Natural killer cell (primary cell): ENCODE measurements at regions of chr6 and their contacts with region 1.

Region 1: DNA sequence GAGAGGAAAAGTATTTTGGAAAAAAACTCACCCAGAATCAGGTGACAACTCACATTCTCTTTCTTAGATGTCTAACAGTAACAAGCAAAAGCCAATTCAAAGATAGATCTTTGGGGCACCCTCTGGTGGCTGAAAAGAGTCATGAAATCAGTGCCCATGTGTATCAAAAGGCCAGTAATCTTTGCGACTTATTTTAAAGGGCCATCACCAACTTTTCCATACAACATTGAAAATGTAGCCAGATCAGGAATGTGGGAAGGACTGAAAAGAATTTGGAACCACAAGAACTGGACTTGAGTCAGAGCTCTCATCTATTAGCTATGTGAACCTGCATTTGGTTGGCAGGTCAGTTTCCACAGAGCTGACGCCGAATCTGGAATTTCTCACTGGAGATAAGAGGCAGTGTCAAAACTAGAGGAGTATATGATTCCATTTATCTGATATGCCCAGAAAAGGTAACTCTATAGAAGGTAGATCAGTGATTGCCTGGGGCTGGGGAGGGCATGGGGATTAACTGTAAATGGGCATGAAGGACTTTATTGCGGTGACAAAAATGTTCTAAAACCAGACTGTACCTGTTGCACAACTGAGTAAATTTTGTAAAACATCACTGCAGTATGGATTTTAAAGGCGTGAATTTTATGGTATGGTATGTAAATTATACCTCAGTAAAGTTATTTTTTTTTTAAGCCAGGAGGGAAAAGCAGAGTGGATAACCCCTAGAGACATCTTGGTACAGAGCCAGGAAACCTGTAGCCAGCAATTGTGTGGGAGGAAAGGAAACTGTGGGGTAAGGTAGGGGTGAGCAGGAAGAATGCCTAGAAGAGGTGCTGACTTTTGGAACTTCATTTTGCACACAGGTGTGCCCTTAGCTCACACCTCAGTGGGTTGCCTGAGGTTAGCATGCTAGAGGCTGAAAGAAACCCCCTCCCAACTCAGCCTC is 117.1 kb upstream of the ASF1A start:
- DNase-seq: peak; percentile 36 to 84
- ATAC-seq: peak; percentile 83 to 92 (median 85)
- H3K4me3 ChIP-seq: no peak overlapping the region
- H3K4me3 Mint-ChIP-seq: no peak overlapping the region
- H3K27ac ChIP-seq: no peak overlapping the region
- H3K27ac Mint-ChIP-seq: no peak overlapping the region
- H3K4me1 ChIP-seq: no peaks in the 10 kb centered on the region
- H3K4me1 Mint-ChIP-seq: peaks cover 6% of the 10 kb centered on the region in 2 donors
- H3K27me3 ChIP-seq: no peaks in the 10 kb centered on the region
- H3K27me3 Mint-ChIP-seq: peaks cover 0 to 3% of the 10 kb centered on the region in 2 donors
- CTCF ChIP-seq: peak; percentile 82

Region 2: DNA sequence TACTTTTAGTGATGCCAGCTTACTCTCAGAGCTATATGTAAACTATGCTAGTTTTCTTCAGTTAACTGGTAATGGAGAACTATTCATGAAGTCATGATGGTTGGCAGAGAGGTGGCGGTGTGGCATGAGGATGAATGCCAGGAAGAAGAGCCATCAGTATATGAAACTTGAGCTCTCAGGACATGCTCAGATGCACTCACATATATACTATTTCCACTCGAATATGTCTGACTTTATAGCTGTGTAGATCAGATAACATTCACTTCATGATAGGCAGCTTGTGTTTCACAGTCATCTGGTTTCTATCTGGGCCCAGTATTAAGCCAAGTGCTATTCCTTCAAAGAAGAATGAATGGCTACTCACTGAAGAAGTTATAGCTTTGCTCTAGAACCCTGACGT is 79.3 kb before region 1 on chr6:
- intact Hi-C with region 1: loop called (anchors 1 kb)
- DNase-seq: peak in 1 of 2 donors; percentile 50
- ATAC-seq: peak in 1 of 3 donors; percentile 36
- H3K4me3 ChIP-seq: no peak overlapping the region
- H3K4me3 Mint-ChIP-seq: no peak overlapping the region
- H3K27ac ChIP-seq: no peak overlapping the region
- H3K27ac Mint-ChIP-seq: no peak overlapping the region
- H3K4me1 ChIP-seq: no peaks in the 10 kb centered on the region
- H3K4me1 Mint-ChIP-seq: peaks cover 66 to 71% of the 10 kb centered on the region in 2 donors
- H3K27me3 ChIP-seq: no peaks in the 10 kb centered on the region
- H3K27me3 Mint-ChIP-seq: no peaks in the 10 kb centered on the region
- CTCF ChIP-seq: no peak

Region 3: DNA sequence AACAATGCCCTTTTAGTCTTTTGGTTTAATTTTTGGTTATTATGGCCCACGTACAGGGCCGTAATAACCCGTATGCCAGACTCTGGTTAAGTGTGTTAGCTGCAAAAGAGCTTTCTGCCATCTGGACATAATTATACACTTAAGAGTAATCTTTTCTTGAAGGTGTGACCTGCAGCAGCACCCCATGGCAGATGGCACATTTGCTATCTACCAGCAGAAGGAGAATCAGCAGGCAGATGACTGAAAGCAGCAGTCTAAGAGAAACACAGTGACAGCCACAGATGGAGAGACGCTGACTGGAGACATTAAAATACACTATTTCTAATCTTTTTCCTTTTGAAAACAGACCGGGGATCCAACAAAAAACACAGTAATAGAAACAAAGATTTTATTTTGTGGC is 135.8 kb after region 1 on chr6:
- intact Hi-C with region 1: no loop called
- DNase-seq: no peak
- ATAC-seq: no peak
- H3K4me3 ChIP-seq: no peak overlapping the region
- H3K4me3 Mint-ChIP-seq: no peak overlapping the region
- H3K27ac ChIP-seq: no peak overlapping the region
- H3K27ac Mint-ChIP-seq: no peak overlapping the region
- H3K4me1 ChIP-seq: no peaks in the 10 kb centered on the region
- H3K4me1 Mint-ChIP-seq: no peaks in the 10 kb centered on the region
- H3K27me3 ChIP-seq: no peaks in the 10 kb centered on the region
- H3K27me3 Mint-ChIP-seq: no peaks in the 10 kb centered on the region
- CTCF ChIP-seq: no peak